Activated CD4-positive, alpha-beta memory T cell treated with anti-CD3 and anti-CD28 coated beads for 36 hours (primary cell): ENCODE measurements at regions of chr3 and their contacts with region 1.

Region 1: DNA sequence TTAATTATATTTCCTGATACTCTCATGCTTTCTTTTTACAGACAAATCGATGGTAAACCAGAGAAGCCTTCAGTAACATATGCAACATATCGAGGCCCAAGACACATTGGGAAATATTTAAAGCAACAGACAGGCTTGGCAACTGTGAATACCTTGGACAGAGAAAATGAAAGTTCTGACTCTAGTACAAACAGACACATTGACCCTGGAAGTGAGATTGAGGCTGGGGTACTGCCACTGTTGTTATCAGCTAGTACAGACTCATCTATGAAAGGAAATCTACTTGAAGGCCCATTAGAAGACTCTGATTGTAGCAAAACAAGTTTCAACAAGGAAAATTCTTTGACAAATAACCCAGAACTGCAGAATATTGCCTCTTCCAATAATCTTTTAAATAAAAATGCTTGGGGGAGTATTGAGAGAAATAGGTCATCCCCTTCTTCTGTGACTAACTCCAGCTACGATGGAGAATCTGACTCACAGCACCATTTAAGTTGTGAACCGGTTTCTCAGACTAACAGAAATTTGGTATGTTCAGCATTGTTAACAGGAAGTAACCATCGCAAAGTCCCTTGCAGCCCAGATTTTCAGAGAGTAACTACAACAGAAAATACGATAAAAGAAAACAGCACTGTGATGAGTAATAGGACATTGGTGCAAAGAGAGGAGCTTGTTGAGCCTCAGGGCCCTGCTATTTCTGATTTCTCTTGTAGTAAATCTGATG is 50.2 kb downstream of the CRYBG3 start:
- DNase-seq: peak; percentile 41
- H3K4me3 Mint-ChIP-seq: peak overlapping the region; percentile 14
- H3K27ac Mint-ChIP-seq: peak overlapping the region; percentile 81
- H3K4me1 Mint-ChIP-seq: peaks cover 25% of the 10 kb centered on the region
- H3K27me3 Mint-ChIP-seq: no peaks in the 10 kb centered on the region

Region 2: DNA sequence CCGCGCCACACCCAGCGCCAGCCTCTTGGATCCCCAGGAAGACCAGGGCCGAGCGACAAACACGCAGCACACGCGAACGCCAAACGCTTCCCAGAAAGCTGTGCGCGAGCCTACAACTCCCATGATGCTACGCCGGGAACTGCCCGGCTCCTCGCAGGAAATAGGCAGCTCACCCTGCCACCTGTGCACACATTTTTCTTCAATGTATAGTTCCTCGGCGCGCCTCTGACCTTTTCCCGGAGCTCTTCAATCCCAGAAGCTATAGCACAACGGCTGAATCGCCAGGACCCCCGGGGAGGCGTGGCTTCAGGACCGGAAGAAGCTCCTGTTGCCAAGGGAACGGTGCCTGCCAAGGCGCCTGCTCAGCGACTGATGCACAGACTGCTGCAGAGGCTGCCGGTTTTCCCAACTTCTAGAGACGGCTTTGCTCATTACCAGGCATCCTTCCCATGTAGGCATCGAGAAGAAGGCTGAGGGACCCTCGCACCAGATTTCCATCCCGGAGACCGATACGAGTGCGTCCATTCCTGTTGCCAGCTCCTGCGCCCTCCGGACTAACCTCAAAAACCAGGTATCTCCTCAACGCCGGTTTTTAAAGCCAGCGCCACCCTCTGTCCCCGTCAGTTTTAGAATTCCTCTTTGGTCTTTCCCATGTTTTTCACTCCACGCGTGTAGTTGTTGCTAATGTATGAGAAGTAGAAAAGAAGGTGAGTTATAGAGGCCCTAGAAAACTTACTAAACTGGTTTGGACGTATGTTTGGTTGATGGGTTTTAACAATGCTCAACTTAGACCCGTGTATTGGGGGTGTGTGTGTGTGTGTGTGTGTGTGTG is 107.3 kb before region 1 on chr3 and contains the start of gene ARL6:
- CTCF ChIA-PET with region 1: no interaction called
- POLR2A ChIA-PET with region 1: no interaction called
- intact Hi-C with region 1: loop called (anchors 1 kb)
- DNase-seq: peak; percentile 81
- H3K4me3 Mint-ChIP-seq: peak within 1 kb of the TSS; percentile 98
- H3K27ac Mint-ChIP-seq: peak within 1 kb of the TSS; percentile 94
- H3K4me1 Mint-ChIP-seq: peaks cover 21% of the 10 kb centered on the region
- H3K27me3 Mint-ChIP-seq: no peaks in the 10 kb centered on the region
- total RNA-seq, gene ARL6: 3.9 to 6.1 TPM

Region 3: GRCh38 chr3:97815149-97815917 is 56.6 kb before region 1 on chr3:
- CTCF ChIA-PET with region 1: no interaction called
- POLR2A ChIA-PET with region 1: no interaction called
- intact Hi-C with region 1: loop called (anchors 2 kb)
- DNase-seq: peak; percentile 73
- H3K4me3 Mint-ChIP-seq: no peak overlapping the region
- H3K27ac Mint-ChIP-seq: peak overlapping the region; percentile 65
- H3K4me1 Mint-ChIP-seq: peaks cover 15% of the 10 kb centered on the region
- H3K27me3 Mint-ChIP-seq: no peaks in the 10 kb centered on the region

Region 4: GRCh38 chr3:97882975-97883598 is 11.1 kb after region 1 on chr3:
- CTCF ChIA-PET with region 1: no interaction called
- POLR2A ChIA-PET with region 1: no interaction called
- intact Hi-C with region 1: loop called (anchors 1 kb)
- DNase-seq: no peak
- H3K4me3 Mint-ChIP-seq: no peak overlapping the region
- H3K27ac Mint-ChIP-seq: no peak overlapping the region
- H3K4me1 Mint-ChIP-seq: peaks cover 14% of the 10 kb centered on the region
- H3K27me3 Mint-ChIP-seq: no peaks in the 10 kb centered on the region

Region 5: GRCh38 chr3:97910931-97911351 is 39.0 kb after region 1 on chr3:
- CTCF ChIA-PET with region 1: no interaction called
- POLR2A ChIA-PET with region 1: no interaction called
- intact Hi-C with region 1: loop called (anchors 2 kb)
- DNase-seq: no peak
- H3K4me3 Mint-ChIP-seq: peak overlapping the region; percentile 77
- H3K27ac Mint-ChIP-seq: peak overlapping the region; percentile 88
- H3K4me1 Mint-ChIP-seq: peaks cover 28% of the 10 kb centered on the region
- H3K27me3 Mint-ChIP-seq: no peaks in the 10 kb centered on the region

Region 6: DNA sequence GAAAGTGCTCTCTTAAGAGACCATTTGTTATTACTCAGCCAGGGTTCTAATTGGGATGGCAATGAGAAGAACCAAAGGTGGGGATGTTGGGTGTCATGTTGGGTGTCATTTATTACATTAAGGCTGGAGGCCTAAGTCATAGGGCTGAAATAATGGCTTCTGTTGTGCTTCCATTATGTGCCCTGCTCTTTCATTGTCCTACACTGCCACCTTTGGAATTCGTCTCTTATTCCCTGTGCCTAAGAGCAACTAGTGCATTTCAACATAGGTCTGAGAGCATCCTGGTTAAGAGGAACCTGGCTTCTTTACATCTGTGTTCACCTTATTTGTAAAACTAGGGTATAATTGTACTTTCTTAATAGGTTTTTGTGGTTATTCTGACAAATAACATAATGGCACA is 68.1 kb after region 1 on chr3:
- CTCF ChIA-PET with region 1: no interaction called
- POLR2A ChIA-PET with region 1: no interaction called
- intact Hi-C with region 1: loop called (anchors 2 kb)
- DNase-seq: no peak
- H3K4me3 Mint-ChIP-seq: no peak overlapping the region
- H3K27ac Mint-ChIP-seq: no peak overlapping the region
- H3K4me1 Mint-ChIP-seq: peaks cover 21% of the 10 kb centered on the region
- H3K27me3 Mint-ChIP-seq: no peaks in the 10 kb centered on the region